Heart right ventricle (tissue), 16 donors: ENCODE measurements at regions of chr15 and their contacts with region 1.

Region 1: GRCh38 chr15:90320061-90320884 is 31.8 kb upstream of the ZNF774 start:
- DNase-seq: peak; percentile 73 to 84
- ATAC-seq: peak; percentile 87 to 95 (median 92)
- H3K4me3 ChIP-seq: peak overlapping the region in 5 of 10 donors; percentile 11 to 41 (median 20)
- H3K27ac ChIP-seq: peak overlapping the region in 3 of 10 donors; percentile 28 to 61 (median 33)
- H3K4me1 ChIP-seq: peaks cover 0 to 30% (median 18%) of the 10 kb centered on the region in 9 donors
- H3K27me3 ChIP-seq: no peaks in the 10 kb centered on the region
- CTCF ChIP-seq: peak; percentile 96 to 100 (median 99)

Region 2: GRCh38 chr15:90482124-90483011 is 162.1 kb after region 1 on chr15:
- intact Hi-C with region 1: loop called in 9 of 10 experiments (anchors 1 to 5 kb)
- DNase-seq: peak in 1 of 2 donors; percentile 50
- ATAC-seq: peak in 7 of 8 donors; percentile 48 to 75 (median 60)
- H3K4me3 ChIP-seq: no peak overlapping the region
- H3K27ac ChIP-seq: no peak overlapping the region
- H3K4me1 ChIP-seq: no peaks in the 10 kb centered on the region
- H3K27me3 ChIP-seq: no peaks in the 10 kb centered on the region
- CTCF ChIP-seq: peak; percentile 50 to 88 (median 73)

Region 3: GRCh38 chr15:90489514-90489913 is 169.2 kb after region 1 on chr15:
- intact Hi-C with region 1: loop called in 3 of 10 experiments (anchors 5 kb)
- DNase-seq: no peak
- ATAC-seq: no peak
- H3K4me3 ChIP-seq: no peak overlapping the region
- H3K27ac ChIP-seq: no peak overlapping the region
- H3K4me1 ChIP-seq: no peaks in the 10 kb centered on the region
- H3K27me3 ChIP-seq: no peaks in the 10 kb centered on the region
- CTCF ChIP-seq: no peak

Region 4: DNA sequence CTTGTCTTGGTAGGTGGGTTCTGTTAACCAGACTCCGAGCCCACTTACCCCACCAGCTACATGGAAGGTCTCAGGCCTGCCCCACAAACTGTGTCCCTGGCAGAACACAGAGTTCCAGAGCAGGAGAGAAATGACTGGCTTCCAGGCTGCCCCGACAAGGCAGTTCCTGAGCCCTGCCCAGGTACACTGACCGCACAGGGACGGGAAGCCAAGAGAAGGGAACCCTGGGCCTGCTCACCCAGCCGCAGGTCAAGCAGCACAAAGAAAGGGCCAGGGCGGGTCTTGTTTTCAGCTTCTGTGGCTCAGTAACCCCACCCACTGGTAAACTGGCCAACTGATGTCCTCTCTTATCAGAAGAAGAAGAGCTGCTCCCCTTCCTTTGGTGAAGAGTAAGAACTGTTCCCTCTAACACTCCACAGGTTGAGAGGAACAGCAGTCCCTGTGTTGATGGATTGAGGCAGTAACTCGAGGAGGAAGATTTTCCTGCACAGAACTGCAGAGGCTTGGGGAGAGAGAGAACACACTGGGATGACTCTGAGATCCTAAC is 277.8 kb after region 1 on chr15:
- intact Hi-C with region 1: loop called in 3 of 10 experiments (anchors 5 to 10 kb)
- DNase-seq: peak; percentile 37 to 59
- ATAC-seq: peak; percentile 36 to 88 (median 74)
- H3K4me3 ChIP-seq: no peak overlapping the region
- H3K27ac ChIP-seq: peak overlapping the region in 9 of 10 donors; percentile 11 to 91 (median 52)
- H3K4me1 ChIP-seq: peaks cover 0 to 64% (median 40%) of the 10 kb centered on the region in 9 donors
- H3K27me3 ChIP-seq: no peaks in the 10 kb centered on the region
- CTCF ChIP-seq: peak in 6 of 9 donors; percentile 24 to 44 (median 36)

Region 5: GRCh38 chr15:90603893-90604292 is 283.6 kb after region 1 on chr15:
- intact Hi-C with region 1: loop called in 3 of 10 experiments (anchors 5 to 10 kb)
- DNase-seq: peak in 1 of 2 donors; percentile 49
- ATAC-seq: peak in 1 of 8 donors; percentile 42
- H3K4me3 ChIP-seq: no peak overlapping the region
- H3K27ac ChIP-seq: no peak overlapping the region
- H3K4me1 ChIP-seq: peaks cover 0 to 12% (median 2%) of the 10 kb centered on the region in 9 donors
- H3K27me3 ChIP-seq: no peaks in the 10 kb centered on the region
- CTCF ChIP-seq: peak in 8 of 9 donors; percentile 11 to 62 (median 51)

Region 6: DNA sequence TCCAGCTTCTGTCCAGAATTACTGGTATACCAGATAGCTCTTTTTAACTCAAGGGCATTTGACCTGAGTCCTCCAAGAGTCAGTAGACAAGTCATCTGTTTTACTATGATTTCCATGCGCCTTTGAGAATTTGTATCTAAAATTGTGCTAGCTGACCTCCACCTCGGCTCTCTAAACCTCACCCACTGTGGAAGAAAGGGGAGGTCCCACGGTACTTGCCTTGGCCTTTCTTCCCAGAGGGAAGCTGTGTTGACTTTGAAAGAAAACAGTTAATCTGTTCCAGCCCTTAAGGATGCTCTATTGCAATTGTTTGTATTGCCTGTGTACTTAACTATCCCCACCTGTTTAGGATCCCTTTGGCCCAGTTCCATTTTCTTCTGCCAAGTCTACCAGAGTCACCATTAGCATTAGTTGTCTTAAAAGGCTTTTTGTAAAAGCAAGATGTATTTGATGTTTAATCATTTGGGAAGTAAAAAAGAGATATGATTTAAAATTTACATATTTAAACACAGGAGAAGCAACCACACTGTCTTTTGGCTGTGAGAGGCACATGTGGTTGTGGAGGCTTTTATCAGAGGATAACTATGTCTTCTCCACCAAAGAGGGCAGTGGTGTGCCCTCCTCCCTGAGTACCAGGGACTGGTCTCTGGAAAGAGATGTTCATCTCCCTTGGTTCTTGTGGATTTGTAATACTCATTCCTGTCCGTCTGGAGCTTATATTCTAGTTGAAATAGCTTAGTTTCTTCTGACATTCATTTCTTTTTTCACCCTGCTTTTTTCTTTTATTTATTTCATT is 298.3 kb after region 1 on chr15:
- intact Hi-C with region 1: loop called in 2 of 10 experiments (anchors 10 kb)
- DNase-seq: no peak
- ATAC-seq: peak; percentile 18 to 63 (median 47)
- H3K4me3 ChIP-seq: no peak overlapping the region
- H3K27ac ChIP-seq: peak overlapping the region in 4 of 10 donors; percentile 4 to 28 (median 17)
- H3K4me1 ChIP-seq: peaks cover 0 to 17% (median 0%) of the 10 kb centered on the region in 9 donors
- H3K27me3 ChIP-seq: no peaks in the 10 kb centered on the region
- CTCF ChIP-seq: no peak